Sigmoid colon (tissue), 7 donors: ENCODE measurements at regions of chr17 and their contacts with region 1.

Region 1: DNA sequence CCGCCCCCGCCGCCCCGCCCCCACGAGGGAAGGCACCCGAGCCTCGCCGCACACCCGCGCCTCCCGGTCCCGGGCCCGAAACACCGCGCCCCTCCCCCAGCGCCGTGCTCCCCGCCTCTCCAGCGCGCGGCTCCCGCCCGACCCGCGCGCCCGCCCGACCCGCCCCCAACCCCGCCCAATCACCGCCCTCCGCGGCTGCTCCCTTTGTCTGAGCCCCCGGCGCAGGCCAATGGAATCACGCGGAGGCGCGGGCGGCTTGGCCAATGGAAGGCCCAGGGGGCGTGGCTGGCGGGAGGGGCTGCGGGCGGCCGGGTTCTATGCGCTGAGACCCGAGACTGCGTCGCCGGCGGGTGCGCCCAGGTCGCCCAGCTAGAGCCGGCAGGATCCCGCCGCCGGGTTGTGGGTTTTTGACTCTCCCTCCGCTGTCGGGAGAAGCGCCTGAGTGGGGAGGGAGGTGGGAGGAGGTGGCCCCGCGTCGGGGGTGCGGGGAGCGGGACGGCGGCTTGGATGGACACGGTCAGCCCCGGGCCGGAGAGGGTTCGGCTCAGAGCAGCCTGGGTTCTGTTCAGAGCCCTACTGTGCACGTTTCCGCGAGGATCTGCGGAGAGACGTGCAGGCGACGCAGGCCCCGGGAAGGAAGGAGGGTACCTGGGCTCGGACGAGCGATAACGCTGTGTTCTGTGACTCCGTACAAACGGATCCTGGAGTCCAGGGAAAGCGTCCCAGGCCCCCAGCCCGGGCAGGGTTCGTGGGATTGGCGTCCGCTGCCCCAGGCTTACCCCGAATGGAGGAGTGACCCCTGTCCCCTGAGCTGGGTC is 49.0 kb upstream of the BAHCC1 start:
- DNase-seq: peak; percentile 100
- H3K4me3 ChIP-seq: peak overlapping the region; percentile 43 to 93 (median 72)
- H3K27ac ChIP-seq: peak overlapping the region; percentile 95 to 100 (median 98)
- H3K4me1 ChIP-seq: peaks cover 0 to 35% (median 17%) of the 10 kb centered on the region in 4 donors
- H3K27me3 ChIP-seq: no peaks in the 10 kb centered on the region
- CTCF ChIP-seq: no peak
- EP300 ChIP-seq: no peak
- POLR2A ChIP-seq: peak; percentile 93 to 97

Region 2: DNA sequence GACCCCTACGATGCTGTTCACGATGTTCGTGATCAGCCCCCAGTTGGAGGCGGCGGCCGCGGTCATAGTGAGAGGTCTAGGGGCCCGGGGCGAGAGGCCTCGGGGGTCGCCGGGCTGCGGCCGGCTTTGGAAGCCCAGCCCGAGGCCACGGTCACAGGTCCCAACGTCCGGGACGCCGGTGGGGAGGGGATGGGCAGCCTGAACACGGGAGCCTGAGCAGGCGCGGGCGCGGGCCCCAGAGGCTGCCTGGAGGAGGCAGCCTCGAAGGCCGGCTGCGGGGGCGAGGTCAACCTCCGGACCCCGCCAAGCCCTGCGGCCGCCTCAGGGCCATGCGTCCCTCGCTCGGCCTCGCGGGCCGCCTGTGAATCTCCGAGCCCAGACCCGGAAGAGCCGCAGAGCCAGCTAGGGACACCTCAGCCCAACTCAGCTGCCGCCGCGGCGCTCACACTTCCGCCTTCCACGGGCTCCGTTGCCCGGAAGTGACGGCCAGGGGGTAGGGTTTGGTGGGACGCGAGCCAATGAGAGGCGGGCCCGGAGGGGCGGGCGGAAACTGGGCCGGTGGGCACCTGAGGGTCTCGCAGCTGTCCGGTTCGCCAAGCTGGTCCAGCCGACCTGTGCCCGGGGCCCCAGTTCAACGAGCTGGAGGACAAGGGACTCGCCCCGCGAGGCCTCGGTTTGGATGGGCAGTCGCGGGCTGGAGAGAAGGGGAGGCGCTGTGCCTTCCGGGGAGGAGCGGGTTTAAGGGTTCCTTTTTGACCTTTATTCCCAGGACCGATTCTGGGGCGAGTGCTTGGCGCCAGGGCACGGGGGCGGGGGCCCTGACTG is 51.2 kb before region 1 on chr17 and contains the start of gene SLC38A10:
- intact Hi-C with region 1: loop called (anchors 2 kb)
- DNase-seq: peak; percentile 95
- H3K4me3 ChIP-seq: peak within 1 kb of the TSS; percentile 81 to 98 (median 84)
- H3K27ac ChIP-seq: peak within 1 kb of the TSS; percentile 92 to 95 (median 94)
- H3K4me1 ChIP-seq: peaks cover 0 to 43% (median 38%) of the 10 kb centered on the region in 4 donors
- H3K27me3 ChIP-seq: no peaks in the 10 kb centered on the region
- CTCF ChIP-seq: no peak
- EP300 ChIP-seq: peak in 1 of 4 donors; percentile 30
- POLR2A ChIP-seq: peak; percentile 92 to 97
- total RNA-seq, gene SLC38A10: 32.1 to 54.8 (median 42.3) TPM

Region 3: GRCh38 chr17:81365148-81365600 is 18.9 kb after region 1 on chr17:
- intact Hi-C with region 1: loop called (anchors 1 kb)
- DNase-seq: peak; percentile 90
- H3K4me3 ChIP-seq: peak overlapping the region in 3 of 4 donors; percentile 22 to 44 (median 31)
- H3K27ac ChIP-seq: peak overlapping the region; percentile 56 to 83 (median 74)
- H3K4me1 ChIP-seq: peaks cover 0 to 23% (median 21%) of the 10 kb centered on the region in 4 donors
- H3K27me3 ChIP-seq: no peaks in the 10 kb centered on the region
- CTCF ChIP-seq: no peak
- EP300 ChIP-seq: no peak
- POLR2A ChIP-seq: peak in 1 of 2 donors; percentile 42

Region 4: GRCh38 chr17:81387100-81388090 is 41.1 kb after region 1 on chr17:
- intact Hi-C with region 1: loop called (anchors 2 kb)
- DNase-seq: peak; percentile 84
- H3K4me3 ChIP-seq: peak overlapping the region; percentile 66 to 87 (median 75)
- H3K27ac ChIP-seq: peak overlapping the region; percentile 93 to 99 (median 98)
- H3K4me1 ChIP-seq: peaks cover 0 to 70% (median 56%) of the 10 kb centered on the region in 4 donors
- H3K27me3 ChIP-seq: no peaks in the 10 kb centered on the region
- CTCF ChIP-seq: no peak
- EP300 ChIP-seq: peak in 1 of 4 donors; percentile 6
- POLR2A ChIP-seq: peak in 1 of 2 donors; percentile 15